Lower leg skin (tissue), 4 donors: ENCODE measurements at regions of chr19 and their contacts with region 1.

Region 1: GRCh38 chr19:56106397-56106849 is 14.7 kb downstream of the ZNF787 start:
- DNase-seq: no peak
- H3K4me3 ChIP-seq: no peak overlapping the region
- CTCF ChIP-seq: no peak
- POLR2A ChIP-seq: no peak

Region 2: GRCh38 chr19:56136362-56136761 is 29.9 kb after region 1 on chr19:
- intact Hi-C with region 1: loop called (anchors 1 kb)
- DNase-seq: no peak
- H3K4me3 ChIP-seq: no peak overlapping the region
- CTCF ChIP-seq: no peak
- POLR2A ChIP-seq: no peak